Activated CD4-positive, alpha-beta T cell treated with anti-CD3 and anti-CD28 coated beads for 36 hours (primary cell): ENCODE measurements at regions of chr22 and their contacts with region 1.

Region 1: GRCh38 chr22:26511857-26512793 is at the start of gene TFIP11:
- DNase-seq: peak; percentile 97
- ATAC-seq: peak; percentile 98
- H3K4me3 Mint-ChIP-seq: peak within 1 kb of the TSS; percentile 95
- H3K27ac Mint-ChIP-seq: peak within 1 kb of the TSS; percentile 95
- H3K4me1 Mint-ChIP-seq: peaks cover 27% of the 10 kb centered on the region
- H3K27me3 Mint-ChIP-seq: no peaks in the 10 kb centered on the region
- total RNA-seq, gene TFIP11: 36.5 to 41.7 TPM

Region 2: DNA sequence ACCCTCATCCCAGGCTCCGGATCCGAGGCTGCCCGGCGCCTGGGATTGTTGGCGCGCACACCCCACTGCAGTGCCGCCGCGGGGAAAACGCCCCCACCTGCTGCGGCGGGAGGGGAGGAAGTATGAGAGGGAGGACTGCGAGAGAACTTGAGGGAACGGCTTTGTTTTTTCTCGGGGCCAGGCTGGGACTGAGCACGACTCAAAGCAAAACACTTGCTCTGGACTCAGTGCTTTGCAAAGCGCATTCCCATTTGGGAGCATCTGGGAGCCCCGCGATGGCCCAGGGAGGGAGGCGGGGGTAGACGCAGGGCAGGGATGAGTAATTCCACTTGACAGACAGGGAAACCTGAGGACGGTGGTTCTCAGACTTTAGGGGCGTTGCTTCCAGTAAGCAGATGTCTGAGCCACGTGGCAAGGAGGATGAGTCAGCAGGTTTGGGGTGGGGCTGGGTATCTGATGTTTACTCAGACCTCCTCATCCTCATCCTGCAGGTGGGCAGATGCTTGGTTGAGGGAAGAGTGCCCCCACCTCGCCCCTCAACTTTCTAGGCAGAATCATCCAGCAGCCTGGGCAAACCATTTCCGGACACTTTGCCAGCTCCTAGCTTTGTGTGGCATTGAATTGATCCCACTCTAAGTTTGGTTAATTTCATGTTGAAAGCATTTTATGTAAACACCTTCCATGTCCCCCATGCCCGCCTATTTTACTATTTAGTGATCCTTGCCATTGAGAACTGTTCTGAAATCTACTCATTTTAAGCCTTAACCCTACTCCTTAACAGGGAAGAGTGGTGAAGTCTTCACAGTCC is 146.8 kb after region 1 on chr22:
- CTCF ChIA-PET with region 1: no interaction called
- POLR2A ChIA-PET with region 1: no interaction called
- intact Hi-C with region 1: loop called in 1 of 2 experiments (anchors 1 kb)
- DNase-seq: peak; percentile 92
- ATAC-seq: peak; percentile 88
- H3K4me3 Mint-ChIP-seq: peak overlapping the region; percentile 81
- H3K27ac Mint-ChIP-seq: peak overlapping the region; percentile 82
- H3K4me1 Mint-ChIP-seq: peaks cover 23% of the 10 kb centered on the region
- H3K27me3 Mint-ChIP-seq: peaks cover 8% of the 10 kb centered on the region